Activated CD4-positive, alpha-beta memory T cell treated with anti-CD3 and anti-CD28 coated beads for 36 hours (primary cell): ENCODE measurements at regions of chr6 and their contacts with region 1.

Region 1: GRCh38 chr6:75526502-75527127 is 33.0 kb upstream of the FILIP1 start:
- DNase-seq: peak; percentile 51
- H3K4me3 Mint-ChIP-seq: no peak overlapping the region
- H3K27ac Mint-ChIP-seq: no peak overlapping the region
- H3K4me1 Mint-ChIP-seq: no peaks in the 10 kb centered on the region
- H3K27me3 Mint-ChIP-seq: peaks cover 10% of the 10 kb centered on the region

Region 2: GRCh38 chr6:75217193-75217592 is 309.4 kb before region 1 on chr6:
- CTCF ChIA-PET with region 1: no interaction called
- POLR2A ChIA-PET with region 1: no interaction called
- intact Hi-C with region 1: loop called (anchors 2 kb)
- DNase-seq: no peak
- H3K4me3 Mint-ChIP-seq: no peak overlapping the region
- H3K27ac Mint-ChIP-seq: no peak overlapping the region
- H3K4me1 Mint-ChIP-seq: peaks cover 7% of the 10 kb centered on the region
- H3K27me3 Mint-ChIP-seq: peaks cover 17% of the 10 kb centered on the region

Region 3: DNA sequence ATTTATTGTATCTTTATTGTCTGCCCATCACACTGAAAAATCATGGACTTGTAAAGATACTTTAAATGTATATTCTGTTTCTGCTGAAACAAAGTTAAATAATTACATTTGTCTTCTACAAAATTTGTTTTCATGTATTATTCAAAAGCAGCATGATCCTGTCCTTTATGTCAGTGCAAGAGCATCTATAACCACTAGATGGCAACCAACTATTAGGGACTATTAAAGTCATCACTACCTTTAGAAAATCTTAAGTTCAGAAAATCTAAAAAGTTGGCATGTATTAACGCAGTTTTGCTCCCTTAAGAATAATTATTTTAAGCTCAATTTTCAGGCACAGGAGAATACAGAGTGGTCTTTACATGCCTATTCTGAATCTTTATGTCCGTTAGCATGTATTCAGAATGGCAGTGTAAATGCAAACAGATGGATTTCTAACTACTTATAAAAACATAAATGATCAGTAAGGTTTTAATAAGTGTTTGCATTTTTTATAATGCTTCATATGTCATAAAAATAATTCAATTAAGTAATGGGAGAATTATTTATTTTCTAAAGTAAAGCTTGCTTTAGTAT is 259.8 kb before region 1 on chr6:
- CTCF ChIA-PET with region 1: interaction called, 32 read pairs
- POLR2A ChIA-PET with region 1: no interaction called
- intact Hi-C with region 1: loop called (anchors 1 kb)
- DNase-seq: no peak
- H3K4me3 Mint-ChIP-seq: no peak overlapping the region
- H3K27ac Mint-ChIP-seq: no peak overlapping the region
- H3K4me1 Mint-ChIP-seq: peaks cover 38% of the 10 kb centered on the region
- H3K27me3 Mint-ChIP-seq: no peaks in the 10 kb centered on the region

Region 4: DNA sequence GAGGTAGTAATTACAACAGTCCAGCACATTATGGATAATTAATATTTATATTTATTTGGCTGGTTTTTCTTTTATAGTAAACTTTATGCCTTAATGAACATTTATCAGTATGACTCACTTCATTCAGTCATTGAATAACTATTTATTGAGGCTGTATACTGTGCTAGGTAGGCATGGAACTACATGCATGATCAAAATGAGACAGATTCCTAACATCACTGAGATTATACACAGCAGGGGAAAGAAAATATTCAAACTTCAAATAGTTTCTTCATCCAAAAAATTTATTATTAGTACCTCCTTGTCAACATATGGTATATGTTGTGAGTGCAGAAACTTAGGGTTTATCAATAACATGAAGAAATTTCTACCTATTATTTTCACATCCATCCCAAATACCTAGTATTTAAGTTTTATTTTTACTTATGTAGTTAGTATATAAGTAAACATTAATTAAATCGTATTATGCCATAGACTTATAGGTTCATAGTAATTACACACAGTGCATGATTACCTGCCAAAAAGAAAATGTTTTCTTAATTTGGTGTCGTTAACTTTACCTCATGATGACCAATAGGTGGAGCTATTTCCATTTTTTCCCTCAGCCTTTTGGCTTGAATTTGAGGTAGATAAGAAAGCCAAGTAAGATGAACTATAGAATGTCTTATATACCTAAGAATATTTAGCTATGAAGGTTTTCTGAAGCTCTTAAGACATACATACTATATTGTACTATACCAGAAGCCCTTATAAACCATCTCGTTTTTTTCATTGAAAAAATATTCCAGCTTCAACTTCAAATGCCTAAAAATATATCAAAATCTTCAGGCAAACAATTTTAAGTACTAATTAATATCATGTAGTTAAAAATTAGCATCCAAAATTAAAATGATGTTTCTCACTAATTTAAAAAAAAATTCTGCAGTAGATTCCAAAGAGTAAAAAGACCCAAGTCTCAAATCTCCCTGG is 229.5 kb before region 1 on chr6:
- CTCF ChIA-PET with region 1: interaction called, 44 read pairs
- POLR2A ChIA-PET with region 1: no interaction called
- intact Hi-C with region 1: loop called (anchors 1 kb)
- DNase-seq: no peak
- H3K4me3 Mint-ChIP-seq: no peak overlapping the region
- H3K27ac Mint-ChIP-seq: no peak overlapping the region
- H3K4me1 Mint-ChIP-seq: no peaks in the 10 kb centered on the region
- H3K27me3 Mint-ChIP-seq: no peaks in the 10 kb centered on the region

Region 5: DNA sequence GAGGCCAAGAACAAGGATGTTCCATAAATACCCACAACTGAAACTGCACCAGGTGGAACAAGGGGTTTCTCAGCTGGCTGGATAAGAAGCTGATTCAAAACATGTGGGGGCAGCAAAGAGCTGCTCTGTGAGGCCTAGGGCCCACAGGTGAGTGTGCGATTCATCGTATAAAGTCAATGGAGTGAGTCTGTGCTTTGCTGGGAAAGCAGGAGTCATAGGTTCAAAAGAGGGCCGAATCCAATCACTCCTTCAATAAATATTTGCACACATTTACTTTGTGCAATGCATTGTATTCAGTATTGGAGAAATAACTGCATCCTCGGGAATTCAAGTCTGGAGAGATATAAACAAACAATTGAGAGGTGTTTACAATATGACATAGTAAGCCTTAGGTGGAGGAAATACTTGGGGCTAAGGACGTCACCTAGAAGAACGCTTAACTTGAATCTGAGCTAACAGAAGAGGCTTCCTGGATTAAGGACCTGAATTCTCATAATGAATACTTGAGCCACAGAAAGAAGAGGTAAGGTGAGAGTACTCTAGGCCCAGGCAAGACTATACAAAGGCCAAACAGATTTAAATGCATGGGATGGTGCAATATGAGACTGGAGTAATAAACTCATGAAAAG is 158.3 kb before region 1 on chr6:
- CTCF ChIA-PET with region 1: interaction called, 3 read pairs
- POLR2A ChIA-PET with region 1: no interaction called
- intact Hi-C with region 1: loop called (anchors 10 kb)
- DNase-seq: peak; percentile 15
- H3K4me3 Mint-ChIP-seq: no peak overlapping the region
- H3K27ac Mint-ChIP-seq: no peak overlapping the region
- H3K4me1 Mint-ChIP-seq: no peaks in the 10 kb centered on the region
- H3K27me3 Mint-ChIP-seq: peaks cover 2% of the 10 kb centered on the region